ENCODE measurements at regions of chr5 and their contacts with region 1.

Region 1: DNA sequence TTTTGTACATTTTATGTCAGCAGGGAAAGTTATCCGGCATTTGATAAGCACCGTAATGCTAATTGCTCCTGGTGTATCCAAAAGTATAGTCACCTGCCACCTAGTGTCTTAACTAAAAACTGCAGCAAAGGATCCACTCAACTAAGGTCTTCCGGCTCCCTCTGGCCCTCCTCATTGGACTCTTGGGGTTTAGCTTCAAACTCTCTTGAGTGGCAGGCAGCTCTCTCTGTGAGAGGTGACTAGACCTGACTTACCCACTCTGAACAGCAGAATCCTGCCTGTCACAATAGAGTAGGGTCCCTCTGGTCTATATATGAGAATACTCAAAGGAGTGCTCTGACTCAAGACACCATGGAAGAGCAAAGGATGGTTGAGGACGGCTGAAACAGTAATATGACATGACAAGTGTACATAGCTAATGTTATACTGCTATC is 60.3 kb upstream of the CAST start:
- DNase-seq: no peak
- ATAC-seq: peak; percentile 90

Region 2: GRCh38 chr5:96344678-96345577 is 256.9 kb before region 1 on chr5:
- intact Hi-C with region 1: loop called (anchors 10 kb)
- DNase-seq: no peak
- ATAC-seq: peak; percentile 87

Measured in sciatic nerve (tissue), 2 donors.